ENCODE measurements at regions of chr10 and their contacts with region 1.

Region 1: DNA sequence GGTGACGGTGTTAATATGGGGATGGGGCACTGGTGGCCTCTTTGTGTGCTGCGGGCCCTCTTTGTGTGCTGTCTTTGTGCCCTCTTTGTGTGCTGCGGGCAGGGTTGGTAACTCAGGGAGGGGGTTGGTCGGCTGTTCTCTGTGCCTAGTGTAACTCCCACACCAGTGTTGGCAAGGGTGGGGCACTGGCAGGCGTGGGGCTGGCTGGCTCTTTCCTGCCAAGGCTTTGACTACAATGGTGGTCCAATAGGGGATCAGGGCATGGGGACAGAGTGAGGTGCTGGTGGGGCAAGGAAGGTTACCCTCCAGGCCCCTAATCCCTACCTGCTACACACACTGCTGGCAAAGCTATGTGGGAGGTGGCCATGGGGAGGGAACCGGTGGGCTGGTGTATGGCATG is 283.6 kb upstream of the CSTF2T start:
- DNase-seq: no peak
- ATAC-seq: no peak
- H3K4me3 Mint-ChIP-seq: no peak overlapping the region
- H3K27ac Mint-ChIP-seq: no peak overlapping the region
- H3K4me1 Mint-ChIP-seq: peaks cover 1% of the 10 kb centered on the region; the same call in 1 of the 2 replicates
- H3K27me3 Mint-ChIP-seq: no peaks in the 10 kb centered on the region
- CTCF ChIP-seq: no peak

Region 2: GRCh38 chr10:52268790-52269189 is 285.8 kb after region 1 on chr10:
- CTCF ChIA-PET with region 1: no interaction called
- POLR2A ChIA-PET with region 1: interaction called, 10 read pairs
- DNase-seq: no peak
- ATAC-seq: no peak
- H3K4me3 Mint-ChIP-seq: no peak overlapping the region
- H3K27ac Mint-ChIP-seq: no peak overlapping the region
- H3K4me1 Mint-ChIP-seq: peaks cover 21% of the 10 kb centered on the region
- H3K27me3 Mint-ChIP-seq: no peaks in the 10 kb centered on the region
- CTCF ChIP-seq: no peak

Measured in WTC11 (cell line).